SK-N-SH (cell line): ENCODE measurements at regions of chr17 and their contacts with region 1.

Region 1: DNA sequence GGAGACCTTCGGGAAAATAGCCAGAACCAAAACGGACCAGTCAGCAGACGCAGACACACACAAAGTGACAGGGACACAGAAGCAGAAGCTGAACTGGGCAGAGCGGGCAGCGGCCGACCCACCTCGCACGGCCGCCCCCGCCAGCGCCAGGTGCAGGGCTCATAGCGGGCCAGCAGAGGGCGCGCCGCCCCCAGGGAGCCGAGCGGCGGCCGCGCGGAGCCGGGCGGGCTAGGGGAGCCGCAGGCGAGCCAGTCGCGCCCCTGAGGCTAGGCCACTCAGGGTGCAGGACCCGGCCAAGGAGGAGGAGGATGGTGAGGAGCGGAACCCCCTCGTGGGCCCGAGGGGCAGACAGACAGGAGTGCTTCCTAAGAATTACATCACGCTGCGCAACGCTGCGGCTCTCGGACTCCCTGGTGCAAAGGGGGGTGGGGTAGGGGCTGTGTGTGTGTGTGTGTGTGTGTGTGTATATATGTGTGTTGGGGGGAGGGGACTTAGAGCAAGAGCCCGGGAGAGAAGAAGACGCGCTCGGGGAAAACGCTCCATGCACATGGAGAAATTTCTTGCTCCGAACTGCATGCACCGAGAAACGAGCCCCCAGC is 913 bp upstream of the NOG start:
- DNase-seq: peak; percentile 95
- H3K4me3 ChIP-seq: peak overlapping the region; percentile 54 to 74
- H3K27ac ChIP-seq: peak overlapping the region in 1 of 2 experiments; percentile 69; a peak in 1 of 4 replicates
- H3K4me1 ChIP-seq: peaks cover 5 to 18% of the 10 kb centered on the region in 2 experiments; a peak in 3 of 4 replicates
- H3K27me3 ChIP-seq: peaks cover 36% of the 10 kb centered on the region
- CTCF ChIP-seq: peak; percentile 98
- EP300 ChIP-seq: no peak
- RAD21 ChIP-seq: peak; percentile 81

Region 2: DNA sequence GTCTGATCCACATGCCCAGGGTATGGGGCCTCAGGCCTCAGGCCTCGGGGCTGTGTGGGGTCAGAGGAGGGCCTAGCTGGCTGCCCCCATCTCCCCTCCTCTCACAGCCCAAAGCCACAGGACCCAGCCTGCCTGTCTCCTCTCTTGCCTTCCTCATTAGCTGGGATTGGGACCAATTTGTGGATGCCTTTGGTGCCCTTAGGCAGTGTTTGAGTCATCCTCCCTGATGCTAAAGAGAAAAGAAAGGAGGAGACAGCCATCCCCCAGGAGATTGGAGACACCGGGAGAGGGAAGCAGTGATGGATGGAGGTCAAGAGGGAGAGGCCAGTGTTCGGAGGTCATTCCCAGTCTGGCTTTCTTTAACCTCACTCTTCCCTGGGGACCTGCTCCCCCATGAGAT is 22.4 kb before region 1 on chr17:
- CTCF ChIA-PET with region 1: interaction called, 45 read pairs
- POLR2A ChIA-PET with region 1: no interaction called
- DNase-seq: no peak
- H3K4me3 ChIP-seq: no peak overlapping the region
- H3K27ac ChIP-seq: no peak overlapping the region
- H3K4me1 ChIP-seq: no peaks in the 10 kb centered on the region
- H3K27me3 ChIP-seq: 0 out of 2 replicates have a peak, but pooled peaks cover 5% of the 10 kb centered on the region
- CTCF ChIP-seq: no peak
- EP300 ChIP-seq: no peak
- RAD21 ChIP-seq: no peak

Region 3: DNA sequence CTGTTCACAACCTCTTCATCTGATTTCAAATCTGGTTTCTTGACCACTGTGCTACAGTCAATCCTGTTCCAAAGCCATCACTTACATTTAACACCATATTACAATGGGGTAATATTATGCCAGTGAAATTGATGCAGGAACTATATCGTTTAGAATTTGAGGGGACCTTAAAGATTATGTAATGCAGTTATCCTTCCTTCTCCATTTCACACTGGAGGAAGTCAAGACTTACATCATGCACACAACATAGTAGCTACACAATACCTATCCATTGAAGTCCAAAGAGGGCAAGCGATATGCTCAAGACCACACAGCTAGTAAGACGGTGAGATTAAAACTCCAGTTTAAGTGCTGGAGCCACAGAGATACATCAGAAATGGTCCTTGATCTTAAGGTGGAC is 17.7 kb after region 1 on chr17:
- CTCF ChIA-PET with region 1: interaction called, 37 read pairs
- POLR2A ChIA-PET with region 1: no interaction called
- DNase-seq: no peak
- H3K4me3 ChIP-seq: no peak overlapping the region
- H3K27ac ChIP-seq: no peak overlapping the region
- H3K4me1 ChIP-seq: no peaks in the 10 kb centered on the region
- H3K27me3 ChIP-seq: no peaks in the 10 kb centered on the region
- CTCF ChIP-seq: no peak
- EP300 ChIP-seq: no peak
- RAD21 ChIP-seq: no peak

Region 4: GRCh38 chr17:56679115-56679766 is 86.7 kb after region 1 on chr17:
- CTCF ChIA-PET with region 1: interaction called, 25 read pairs
- POLR2A ChIA-PET with region 1: no interaction called
- DNase-seq: peak; percentile 68
- H3K4me3 ChIP-seq: peak overlapping the region; percentile 27 to 42
- H3K27ac ChIP-seq: no peak overlapping the region; a peak in 1 of 4 replicates
- H3K4me1 ChIP-seq: peaks cover 8 to 28% of the 10 kb centered on the region in 2 experiments; a peak in 3 of 4 replicates
- H3K27me3 ChIP-seq: no peaks in the 10 kb centered on the region; the same call in 1 of the 2 replicates
- CTCF ChIP-seq: peak; percentile 88
- EP300 ChIP-seq: no peak
- RAD21 ChIP-seq: peak; percentile 62

Region 5: GRCh38 chr17:56779898-56780733 is 187.5 kb after region 1 on chr17:
- CTCF ChIA-PET with region 1: interaction called, 46 read pairs
- POLR2A ChIA-PET with region 1: no interaction called
- DNase-seq: peak; percentile 93
- H3K4me3 ChIP-seq: peak overlapping the region; percentile 45 to 61
- H3K27ac ChIP-seq: no peak overlapping the region
- H3K4me1 ChIP-seq: peaks cover 4 to 8% of the 10 kb centered on the region in 2 experiments; a peak in 2 of 4 replicates
- H3K27me3 ChIP-seq: no peaks in the 10 kb centered on the region
- CTCF ChIP-seq: peak; percentile 100
- EP300 ChIP-seq: 0 out of 4 replicates have a peak, but pooled peaks of 1 of the 2 experiments have one; percentile 34
- RAD21 ChIP-seq: peak; percentile 85

Region 6: DNA sequence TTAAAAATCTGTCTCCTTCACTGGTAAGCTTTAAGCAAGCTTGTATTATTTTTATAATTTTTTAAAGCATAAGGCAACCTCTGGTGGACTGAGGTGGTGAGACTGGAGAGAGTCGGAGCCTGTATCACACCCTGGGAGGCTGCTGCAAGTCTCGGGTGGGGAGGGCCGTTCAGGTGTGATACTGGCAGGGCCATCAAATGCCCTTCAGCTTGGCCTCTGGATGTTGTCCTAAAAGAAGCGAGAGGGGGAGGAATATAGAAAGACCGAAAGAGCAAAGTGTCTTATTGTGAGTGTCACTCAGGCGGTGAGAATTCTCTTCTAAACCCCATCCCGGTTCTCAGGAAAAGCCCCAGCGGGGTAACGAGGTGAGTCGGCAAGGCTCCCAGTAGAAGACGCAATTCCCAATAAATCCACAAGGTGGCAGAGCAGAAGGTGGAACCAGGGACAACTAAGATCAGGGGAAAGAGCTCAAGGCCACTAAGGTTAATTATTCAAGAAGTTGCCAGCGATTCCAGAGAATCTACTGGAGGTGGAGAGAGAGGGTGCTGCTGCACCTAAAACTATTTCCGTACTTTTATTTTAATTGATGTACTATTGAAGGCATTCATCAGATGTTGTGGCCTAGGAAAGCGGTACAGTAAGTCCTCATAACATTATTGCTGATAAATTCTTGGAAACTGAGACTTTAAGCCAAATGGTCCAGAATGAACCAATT is 227.0 kb after region 1 on chr17:
- CTCF ChIA-PET with region 1: no interaction called
- POLR2A ChIA-PET with region 1: no interaction called
- DNase-seq: peak; percentile 87
- H3K4me3 ChIP-seq: no peak overlapping the region; a peak in 1 of 4 replicates
- H3K27ac ChIP-seq: no peak overlapping the region
- H3K4me1 ChIP-seq: peaks cover 5 to 6% of the 10 kb centered on the region in 2 experiments; a peak in 2 of 4 replicates
- H3K27me3 ChIP-seq: no peaks in the 10 kb centered on the region
- CTCF ChIP-seq: peak; percentile 95
- EP300 ChIP-seq: no peak
- RAD21 ChIP-seq: peak; percentile 88